Cardiac septum (tissue), 1 donor: ENCODE measurements at regions of chr2 and their contacts with region 1.

Region 1: DNA sequence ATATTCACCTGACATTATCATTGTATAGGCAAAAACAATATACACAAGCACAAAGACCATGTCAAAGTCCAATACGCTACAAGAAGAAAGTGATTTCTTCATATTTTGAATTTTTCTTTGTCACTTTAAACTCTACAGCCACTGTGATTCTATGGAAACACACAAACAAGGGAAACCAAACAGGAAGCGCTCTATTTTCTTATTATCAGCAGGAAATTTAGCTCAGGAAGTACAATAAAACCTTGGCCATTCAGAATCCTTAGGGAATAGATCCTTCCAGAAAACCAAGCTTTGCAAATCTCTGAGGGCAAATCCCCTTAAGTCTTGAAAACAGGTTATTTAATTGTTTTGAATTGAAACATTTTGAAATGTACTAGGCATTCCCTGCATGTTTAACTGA is 336.2 kb downstream of the EPHA4 start:
- DNase-seq: no peak

Region 2: DNA sequence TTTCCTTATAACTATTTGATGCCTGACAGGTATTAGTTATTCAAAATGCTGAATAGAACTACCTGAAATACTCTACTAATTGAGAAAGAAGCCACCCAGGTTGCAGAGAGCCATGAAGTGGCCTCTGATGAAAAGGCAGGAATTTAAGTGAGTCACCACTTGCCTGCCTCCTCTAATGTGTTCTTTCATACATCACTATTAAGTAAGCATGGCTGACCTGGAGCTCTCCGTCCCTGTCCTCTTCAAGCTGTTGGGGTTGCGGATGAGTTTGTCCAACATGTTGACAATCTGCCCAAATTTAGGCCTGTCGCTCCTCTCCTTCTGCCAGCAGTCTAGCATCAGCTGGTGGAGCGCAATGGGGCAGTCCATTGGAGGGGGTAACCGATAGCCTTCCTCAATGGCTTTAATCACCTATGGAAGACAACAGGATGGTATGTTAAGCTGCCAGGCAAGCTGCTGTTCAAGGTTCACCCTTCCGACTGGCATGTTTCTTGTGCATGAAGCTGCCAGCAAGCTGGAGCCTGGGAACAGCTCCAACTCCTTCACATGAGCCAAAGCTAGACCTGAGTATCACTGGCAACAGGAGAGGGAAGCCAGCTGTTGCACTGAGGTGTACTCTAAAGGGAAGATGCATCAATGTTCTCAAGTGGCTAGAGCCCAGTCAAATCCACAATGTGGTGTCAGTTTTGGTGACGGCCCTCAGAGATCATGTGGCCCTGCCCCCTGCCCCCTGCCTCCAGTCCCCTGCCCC is 194.0 kb after region 1 on chr2:
- intact Hi-C with region 1: loop called (anchors 10 kb)
- DNase-seq: no peak

Region 3: DNA sequence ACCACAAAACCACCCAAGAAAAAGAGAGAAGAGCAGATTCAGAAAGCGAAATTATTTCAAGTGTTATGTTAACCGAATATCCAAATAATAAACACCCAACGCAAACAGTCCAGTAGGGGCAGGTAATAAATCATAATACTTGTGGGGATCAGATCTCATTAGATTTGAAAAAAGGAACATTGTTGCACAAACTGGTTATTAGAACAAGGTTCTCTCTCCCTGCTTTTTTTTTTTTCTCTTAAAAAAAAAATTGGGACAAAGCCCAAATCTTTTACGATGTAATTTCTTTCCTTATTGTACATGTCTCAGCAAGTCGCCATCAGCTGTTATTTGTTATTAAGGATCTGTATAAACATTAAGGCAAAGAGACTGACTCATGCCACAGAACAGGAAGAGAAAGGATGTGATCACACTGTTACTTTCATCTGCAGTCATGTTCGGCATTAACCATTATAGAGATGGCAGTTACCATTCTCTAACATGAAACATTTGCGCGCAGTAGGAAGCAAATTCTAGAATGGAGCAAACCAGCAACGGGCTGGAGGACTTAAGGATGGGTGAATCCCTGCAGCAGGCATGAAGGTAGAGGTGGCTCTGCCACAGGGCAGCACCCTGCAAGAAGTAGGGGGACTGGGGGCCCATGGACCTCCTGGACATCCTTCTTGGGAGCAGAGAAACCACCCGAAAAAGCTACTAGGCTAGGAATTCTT is 294.2 kb after region 1 on chr2:
- intact Hi-C with region 1: loop called (anchors 5 kb)
- DNase-seq: no peak

Region 4: GRCh38 chr2:221554769-221555493 is 319.0 kb after region 1 on chr2:
- intact Hi-C with region 1: no loop called
- DNase-seq: no peak